Prostate gland (tissue), 2 donors: ENCODE measurements at regions of chr3 and their contacts with region 1.

Region 1: GRCh38 chr3:184371570-184372018 is 6.4 kb downstream of the THPO start:
- DNase-seq: peak; percentile 88
- H3K4me3 ChIP-seq: no peak overlapping the region
- H3K27ac ChIP-seq: no peak overlapping the region
- H3K4me1 ChIP-seq: peaks cover 6% of the 10 kb centered on the region
- H3K27me3 ChIP-seq: no peaks in the 10 kb centered on the region
- CTCF ChIP-seq: peak; percentile 67 to 97 (median 92)
- POLR2A ChIP-seq: no peak

Region 2: GRCh38 chr3:184466413-184466960 is 94.9 kb after region 1 on chr3:
- intact Hi-C with region 1: no loop called
- DNase-seq: no peak
- H3K4me3 ChIP-seq: no peak overlapping the region
- H3K27ac ChIP-seq: no peak overlapping the region
- H3K4me1 ChIP-seq: no peaks in the 10 kb centered on the region
- H3K27me3 ChIP-seq: no peaks in the 10 kb centered on the region
- CTCF ChIP-seq: no peak
- POLR2A ChIP-seq: no peak

Region 3: GRCh38 chr3:184543843-184544512 is 172.4 kb after region 1 on chr3:
- intact Hi-C with region 1: loop called (anchors 5 kb)
- DNase-seq: peak; percentile 83
- H3K4me3 ChIP-seq: no peak overlapping the region
- H3K27ac ChIP-seq: no peak overlapping the region
- H3K4me1 ChIP-seq: no peaks in the 10 kb centered on the region
- H3K27me3 ChIP-seq: no peaks in the 10 kb centered on the region
- CTCF ChIP-seq: peak; percentile 82 to 90 (median 88)
- POLR2A ChIP-seq: no peak